ENCODE measurements at regions of chr5 and their contacts with region 1.

Region 1: DNA sequence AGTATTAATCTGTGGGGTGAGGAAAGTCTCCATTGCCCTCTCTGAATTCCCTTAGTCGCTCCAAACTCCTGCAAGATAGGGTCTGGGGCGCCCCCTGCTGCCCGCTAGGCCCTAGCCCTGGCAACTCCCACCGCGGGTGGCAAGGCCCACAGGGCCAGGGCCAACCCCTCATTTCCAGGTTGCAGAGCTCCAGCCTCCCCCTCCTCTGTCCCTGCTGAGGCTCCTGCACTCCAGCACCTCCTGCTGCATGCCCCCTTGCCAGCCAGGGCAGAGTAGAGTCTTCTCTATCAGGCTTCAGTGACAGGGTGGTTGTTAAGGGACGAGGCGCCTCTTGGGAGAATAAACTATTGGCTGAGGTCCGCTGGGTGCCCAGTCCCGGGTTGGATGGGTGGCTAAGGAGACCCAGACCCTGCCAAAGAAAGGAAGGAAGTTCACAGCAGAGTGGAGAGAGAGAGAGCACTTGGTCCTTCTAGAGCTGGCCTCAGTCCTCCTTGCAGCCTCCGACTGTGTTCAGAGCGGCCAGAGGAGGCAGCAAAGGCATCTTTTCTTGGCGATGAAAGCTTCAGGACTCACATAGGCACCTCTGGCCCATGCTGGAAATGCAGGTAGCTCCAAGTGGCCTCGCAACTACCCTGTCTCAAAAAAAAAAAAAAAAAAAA is 45.6 kb downstream of the SAR1B start:
- DNase-seq: peak; percentile 83
- CTCF ChIP-seq: peak; percentile 92

Region 2: GRCh38 chr5:133861161-133861737 is 725.7 kb before region 1 on chr5:
- CTCF ChIA-PET with region 1: no interaction called
- POLR2A ChIA-PET with region 1: no interaction called
- DNase-seq: no peak
- CTCF ChIP-seq: no peak

Region 3: DNA sequence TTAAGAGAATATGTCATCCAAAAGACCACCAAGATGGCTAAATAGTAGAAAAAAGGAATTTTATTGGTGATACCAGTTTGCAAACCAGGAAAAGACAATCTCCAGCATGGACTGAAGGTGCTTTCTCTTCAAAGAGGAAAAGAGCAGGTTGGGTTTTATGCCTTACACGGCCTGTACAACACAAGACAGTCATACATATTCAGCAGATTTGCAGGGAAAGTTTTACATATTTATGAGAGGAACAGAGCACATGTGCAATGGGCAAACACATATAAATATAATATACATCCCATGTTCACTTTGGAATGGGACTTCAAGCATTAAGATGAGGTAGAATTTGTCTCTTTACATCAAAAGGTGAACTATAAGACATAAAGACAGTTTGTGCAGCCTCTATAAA is 290.8 kb before region 1 on chr5:
- CTCF ChIA-PET with region 1: interaction called, 28 read pairs
- POLR2A ChIA-PET with region 1: no interaction called
- DNase-seq: no peak
- CTCF ChIP-seq: no peak

Region 4: DNA sequence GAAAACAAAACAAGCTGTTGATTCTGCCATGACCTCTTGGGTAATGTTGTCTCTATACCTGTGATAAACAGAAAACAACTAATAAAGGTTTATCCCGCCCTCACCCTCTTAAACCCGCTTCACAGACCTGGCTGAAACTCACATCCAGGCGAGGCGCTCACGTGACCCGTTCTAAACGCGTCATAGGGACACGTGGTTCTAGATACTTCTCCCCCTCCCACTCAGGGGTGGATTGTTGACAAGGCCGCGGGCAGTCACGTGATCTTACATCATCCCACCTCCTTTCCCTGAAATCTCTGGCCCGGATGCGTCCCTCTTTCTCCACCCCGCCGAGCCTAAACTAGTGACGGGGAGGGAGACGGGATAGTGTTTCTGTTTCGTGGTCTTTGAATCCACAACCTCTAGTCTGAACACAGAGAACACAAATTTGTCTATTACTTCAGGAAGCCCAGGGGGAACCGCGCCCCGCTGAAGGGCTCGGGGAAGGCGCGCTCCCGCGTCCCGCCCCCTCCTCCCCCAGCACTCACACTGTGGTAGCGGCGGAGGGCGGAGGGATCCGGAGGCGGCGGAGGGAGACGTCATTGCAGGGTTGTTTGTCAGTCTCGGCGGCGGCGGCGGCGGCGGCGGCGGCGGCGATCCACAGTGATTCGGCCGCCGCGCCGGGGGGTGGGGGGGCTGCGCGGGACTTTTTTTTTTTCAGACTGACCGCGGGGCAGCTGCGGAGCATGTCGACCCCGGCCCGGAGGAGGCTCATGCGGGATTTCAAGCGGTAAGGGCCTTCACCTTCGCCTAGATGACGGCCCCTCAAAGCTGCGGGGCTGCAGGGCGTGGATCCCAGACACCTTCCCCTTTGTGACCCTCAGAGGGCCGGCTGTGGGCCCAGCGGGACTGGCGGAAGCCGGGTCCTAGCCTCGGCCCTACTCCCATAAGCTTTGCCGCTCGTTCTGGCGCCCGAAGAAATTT is 215.8 kb before region 1 on chr5 and contains the start of gene UBE2B:
- CTCF ChIA-PET with region 1: interaction called, 12 read pairs
- POLR2A ChIA-PET with region 1: no interaction called
- DNase-seq: peak; percentile 94
- CTCF ChIP-seq: no peak

Region 5: GRCh38 chr5:134603059-134603458 is 16.1 kb after region 1 on chr5:
- CTCF ChIA-PET with region 1: interaction called, 23 read pairs
- POLR2A ChIA-PET with region 1: no interaction called
- DNase-seq: no peak
- CTCF ChIP-seq: no peak